Heart right ventricle (tissue), 16 donors: ENCODE measurements at regions of chr15 and their contacts with region 1.

Region 1: GRCh38 chr15:88035381-88035780 is 221.2 kb downstream of the NTRK3 start:
- DNase-seq: no peak
- ATAC-seq: no peak
- H3K4me3 ChIP-seq: no peak overlapping the region
- H3K27ac ChIP-seq: no peak overlapping the region
- H3K4me1 ChIP-seq: no peaks in the 10 kb centered on the region
- H3K27me3 ChIP-seq: peaks cover 0 to 15% (median 0%) of the 10 kb centered on the region in 7 donors
- CTCF ChIP-seq: no peak

Region 2: GRCh38 chr15:88061452-88061851 is 26.1 kb after region 1 on chr15:
- intact Hi-C with region 1: loop called in 1 of 10 experiments (anchors 1 kb)
- DNase-seq: no peak
- ATAC-seq: peak in 1 of 8 donors; percentile 38
- H3K4me3 ChIP-seq: no peak overlapping the region
- H3K27ac ChIP-seq: no peak overlapping the region
- H3K4me1 ChIP-seq: no peaks in the 10 kb centered on the region
- H3K27me3 ChIP-seq: peaks cover 0 to 5% (median 0%) of the 10 kb centered on the region in 7 donors
- CTCF ChIP-seq: no peak